HepG2 (cell line): ENCODE measurements at regions of chr16 and their contacts with region 1.

Region 1: GRCh38 chr16:75265845-75266701 is 14.6 kb upstream of the BCAR1 start:
- DNase-seq: peak; percentile 84
- ATAC-seq: peak; percentile 30
- H3K4me3 ChIP-seq: peak overlapping the region; percentile 92 to 99 (median 96)
- H3K27ac ChIP-seq: peak overlapping the region; percentile 75
- H3K4me1 ChIP-seq: peaks cover 69% of the 10 kb centered on the region
- H3K27me3 ChIP-seq: no peaks in the 10 kb centered on the region
- CTCF ChIP-seq: peak; percentile 57
- EP300 ChIP-seq: 0 out of 4 replicates have a peak, but pooled peaks of 1 of the 2 experiments have one; percentile 10
- POLR2A ChIP-seq: peak in 1 of 2 experiments; percentile 27; a peak in 1 of 4 replicates
- RAD21 ChIP-seq: peak; percentile 87

Region 2: GRCh38 chr16:75238132-75238852 is 27.8 kb before region 1 on chr16:
- CTCF ChIA-PET with region 1: no interaction called
- POLR2A ChIA-PET with region 1: interaction called, 82 read pairs
- in situ Hi-C with region 1: no loop called
- intact Hi-C with region 1: loop called (anchors 1 kb)
- DNase-seq: peak; percentile 89
- ATAC-seq: peak; percentile 42
- H3K4me3 ChIP-seq: peak overlapping the region in 1 of 3 experiments; percentile 17; a peak in 1 of 6 replicates
- H3K27ac ChIP-seq: peak overlapping the region; percentile 77
- H3K4me1 ChIP-seq: peaks cover 59% of the 10 kb centered on the region
- H3K27me3 ChIP-seq: no peaks in the 10 kb centered on the region
- CTCF ChIP-seq: no peak
- EP300 ChIP-seq: peak in 1 of 2 experiments; percentile 65; a peak in 3 of 4 replicates
- POLR2A ChIP-seq: no peak
- RAD21 ChIP-seq: no peak

Region 3: GRCh38 chr16:75244844-75245758 is 21.0 kb before region 1 on chr16:
- CTCF ChIA-PET with region 1: no interaction called
- POLR2A ChIA-PET with region 1: interaction called, 151 read pairs
- in situ Hi-C with region 1: no loop called
- intact Hi-C with region 1: loop called (anchors 2 kb)
- DNase-seq: peak; percentile 99
- ATAC-seq: peak; percentile 80
- H3K4me3 ChIP-seq: peak overlapping the region; percentile 11 to 63 (median 25); a peak in 5 of 6 replicates
- H3K27ac ChIP-seq: peak overlapping the region; percentile 97
- H3K4me1 ChIP-seq: peaks cover 85% of the 10 kb centered on the region
- H3K27me3 ChIP-seq: no peaks in the 10 kb centered on the region
- CTCF ChIP-seq: peak; percentile 32
- EP300 ChIP-seq: peak in 1 of 2 experiments; percentile 96
- POLR2A ChIP-seq: peak in 1 of 2 experiments; percentile 91; a peak in 2 of 4 replicates
- RAD21 ChIP-seq: peak; percentile 73

Region 4: DNA sequence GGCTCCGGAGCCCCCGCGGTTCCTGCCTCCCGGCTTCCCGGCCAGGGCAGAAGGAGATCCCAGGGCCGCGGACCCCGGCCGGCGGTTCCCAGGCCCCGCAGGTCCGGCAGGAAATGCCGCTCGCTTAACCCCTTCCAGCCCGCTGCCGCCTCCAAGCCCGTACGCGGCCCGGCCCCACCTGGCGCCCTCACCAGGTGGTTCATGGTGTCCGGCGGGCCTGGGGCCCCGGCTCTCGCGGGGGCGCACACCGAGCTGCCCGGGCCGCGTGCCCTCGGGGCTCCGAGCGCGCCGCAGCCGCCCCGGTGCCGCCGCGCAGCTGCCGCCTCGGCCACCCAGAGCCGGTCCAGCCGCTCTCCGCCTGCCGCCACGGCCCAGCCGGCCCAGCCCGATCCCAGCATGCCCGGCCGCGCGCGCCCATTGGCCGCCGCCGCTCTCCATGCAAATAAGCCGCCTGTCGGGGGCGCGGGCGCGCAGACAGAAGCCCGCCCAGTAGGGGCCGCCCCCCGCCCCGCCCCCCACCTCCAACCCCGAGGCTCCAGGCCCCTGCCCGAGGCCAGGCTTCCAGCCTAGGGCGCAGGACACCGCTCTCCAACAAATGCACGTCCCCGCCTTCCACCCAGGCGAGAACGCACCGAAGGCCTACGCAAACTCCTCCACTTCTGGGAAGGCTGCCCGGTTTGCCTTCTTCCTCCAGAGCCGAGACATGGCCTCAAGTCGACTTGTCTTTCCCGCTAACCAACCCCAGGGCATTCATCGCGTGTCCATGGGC is 14.6 kb before region 1 on chr16 and contains the start of gene BCAR1:
- CTCF ChIA-PET with region 1: no interaction called
- POLR2A ChIA-PET with region 1: interaction called, 151 read pairs
- in situ Hi-C with region 1: no loop called
- intact Hi-C with region 1: no loop called
- DNase-seq: peak; percentile 86
- ATAC-seq: peak; percentile 76
- H3K4me3 ChIP-seq: peak within 1 kb of the TSS; percentile 76 to 87 (median 86)
- H3K27ac ChIP-seq: peak within 1 kb of the TSS; percentile 97
- H3K4me1 ChIP-seq: peaks cover 84% of the 10 kb centered on the region
- H3K27me3 ChIP-seq: no peaks in the 10 kb centered on the region; a peak in 1 of 5 replicates
- CTCF ChIP-seq: peak; percentile 25
- EP300 ChIP-seq: no peak
- POLR2A ChIP-seq: no peak; a peak in 1 of 4 replicates
- RAD21 ChIP-seq: peak; percentile 80
- total RNA-seq, gene BCAR1: 35.9 and 48.1 TPM in 2 replicates

Region 5: GRCh38 chr16:75361936-75362335 is 95.9 kb after region 1 on chr16:
- CTCF ChIA-PET with region 1: no interaction called
- POLR2A ChIA-PET with region 1: no interaction called
- in situ Hi-C with region 1: no loop called
- intact Hi-C with region 1: no loop called
- DNase-seq: no peak
- ATAC-seq: no peak
- H3K4me3 ChIP-seq: no peak overlapping the region
- H3K27ac ChIP-seq: no peak overlapping the region
- H3K4me1 ChIP-seq: no peaks in the 10 kb centered on the region
- H3K27me3 ChIP-seq: no peaks in the 10 kb centered on the region
- CTCF ChIP-seq: no peak
- EP300 ChIP-seq: no peak
- POLR2A ChIP-seq: no peak
- RAD21 ChIP-seq: no peak

Region 6: DNA sequence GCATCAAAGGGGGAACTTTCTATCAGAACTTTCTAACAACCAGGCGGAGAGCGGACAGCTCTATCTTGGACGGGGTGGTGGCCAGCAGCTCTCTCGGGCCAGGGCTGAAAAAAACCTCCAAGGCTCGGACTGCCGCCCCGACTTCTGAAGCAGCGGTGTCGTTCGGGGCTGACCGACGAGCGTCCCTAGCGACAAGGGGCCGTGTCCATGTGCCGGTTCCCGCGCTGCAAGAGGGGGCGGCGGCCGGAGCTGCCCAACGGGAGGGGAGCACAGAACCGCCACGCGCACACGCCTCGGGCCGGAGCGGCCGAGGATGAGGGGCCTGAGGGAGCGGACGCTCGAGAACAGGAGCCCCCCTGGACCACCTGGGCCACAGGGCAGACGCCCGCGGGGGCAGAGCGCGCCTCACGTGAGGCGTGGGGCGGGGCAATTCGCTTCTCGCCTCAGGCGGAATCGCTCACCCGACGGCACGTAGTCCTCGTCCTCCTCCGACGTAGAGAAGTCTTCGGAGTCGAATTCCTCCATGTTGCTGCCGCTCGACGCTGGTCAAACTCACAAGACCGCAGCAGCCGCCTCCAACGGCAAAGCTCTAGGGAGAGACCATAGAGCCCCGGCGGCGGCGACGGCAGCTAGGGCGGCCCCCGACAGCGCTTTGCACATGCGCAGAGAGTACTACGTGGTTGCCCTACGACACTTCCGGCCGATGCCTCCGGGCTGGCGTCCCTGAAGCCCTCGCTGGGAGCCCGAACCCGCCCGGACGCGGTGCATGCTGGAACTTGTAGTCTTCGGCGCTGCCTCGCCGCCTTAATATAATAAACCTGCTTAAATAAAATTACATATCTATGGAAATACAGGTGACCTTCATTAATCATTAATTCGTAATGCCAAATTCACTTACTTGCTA is 167.0 kb after region 1 on chr16 and contains the start of gene CFDP1:
- CTCF ChIA-PET with region 1: no interaction called
- POLR2A ChIA-PET with region 1: interaction called, 11 read pairs
- in situ Hi-C with region 1: no loop called
- intact Hi-C with region 1: no loop called
- DNase-seq: peak; percentile 94
- ATAC-seq: peak; percentile 93
- H3K4me3 ChIP-seq: peak within 1 kb of the TSS; percentile 76 to 95 (median 78)
- H3K27ac ChIP-seq: peak within 1 kb of the TSS; percentile 94
- H3K4me1 ChIP-seq: peaks cover 58% of the 10 kb centered on the region
- H3K27me3 ChIP-seq: no peaks in the 10 kb centered on the region; a peak in 1 of 5 replicates
- CTCF ChIP-seq: peak; percentile 49
- EP300 ChIP-seq: peak in 1 of 2 experiments; percentile 11; a peak in 1 of 4 replicates
- POLR2A ChIP-seq: peak; percentile 81 to 88
- RAD21 ChIP-seq: peak; percentile 23; the same call in 1 of the 2 replicates
- total RNA-seq, gene CFDP1: 153 and 198 TPM in 2 replicates